Activated naive CD4-positive, alpha-beta T cell treated with anti-CD3 and anti-CD28 coated beads, Interleukin-2, amount 10 ng/mL, durations not matched to agents 7 days and 5 days (primary cell): ENCODE measurements at regions of chr2 and their contacts with region 1.

Region 1: GRCh38 chr2:234446404-234447076 is 50.3 kb downstream of the ARL4C start:
- DNase-seq: peak; percentile 91
- H3K4me3 Mint-ChIP-seq: peak overlapping the region; percentile 64
- H3K27ac Mint-ChIP-seq: peak overlapping the region; percentile 99
- H3K4me1 Mint-ChIP-seq: peaks cover 94% of the 10 kb centered on the region
- H3K27me3 Mint-ChIP-seq: no peaks in the 10 kb centered on the region

Region 2: GRCh38 chr2:234483568-234484251 is 37.2 kb after region 1 on chr2:
- CTCF ChIA-PET with region 1: interaction called, 12 read pairs
- DNase-seq: peak; percentile 88
- H3K4me3 Mint-ChIP-seq: peak overlapping the region; percentile 61
- H3K27ac Mint-ChIP-seq: peak overlapping the region; percentile 93
- H3K4me1 Mint-ChIP-seq: peaks cover 88% of the 10 kb centered on the region
- H3K27me3 Mint-ChIP-seq: no peaks in the 10 kb centered on the region